Kidney (tissue), 22 donors: ENCODE measurements at regions of chr1 and their contacts with region 1.

Region 1: DNA sequence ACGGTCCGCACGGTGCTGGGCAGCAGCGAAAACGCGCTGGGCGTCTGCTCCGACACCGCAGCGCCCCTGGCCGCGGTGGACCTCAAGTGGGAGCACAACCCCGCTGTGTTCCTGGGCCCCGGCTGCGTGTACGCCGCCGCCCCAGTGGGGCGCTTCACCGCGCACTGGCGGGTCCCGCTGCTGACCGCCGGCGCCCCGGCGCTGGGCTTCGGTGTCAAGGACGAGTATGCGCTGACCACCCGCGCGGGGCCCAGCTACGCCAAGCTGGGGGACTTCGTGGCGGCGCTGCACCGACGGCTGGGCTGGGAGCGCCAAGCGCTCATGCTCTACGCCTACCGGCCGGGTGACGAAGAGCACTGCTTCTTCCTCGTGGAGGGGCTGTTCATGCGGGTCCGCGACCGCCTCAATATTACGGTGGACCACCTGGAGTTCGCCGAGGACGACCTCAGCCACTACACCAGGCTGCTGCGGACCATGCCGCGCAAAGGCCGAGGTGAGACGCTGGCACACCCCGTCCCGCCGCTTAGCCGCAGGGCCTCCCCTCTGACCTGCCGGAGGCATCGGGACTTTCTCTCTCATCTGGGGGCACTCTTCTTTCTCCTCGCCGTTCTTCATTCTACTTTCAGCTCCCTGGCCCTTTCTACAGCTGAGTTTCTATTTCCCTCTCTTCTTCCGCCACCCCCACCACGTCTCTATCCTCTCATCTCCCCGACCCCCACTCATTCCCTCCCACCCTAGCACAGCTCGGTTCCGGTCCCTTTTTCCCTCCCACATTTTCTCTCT is 1.0 kb downstream of the NPR1 start:
- DNase-seq: peak in 4 of 5 donors; percentile 54 to 79 (median 64)
- H3K4me3 ChIP-seq: peak overlapping the region; percentile 61 to 73 (median 64)
- H3K27ac ChIP-seq: peak overlapping the region; percentile 74 to 77
- H3K4me1 ChIP-seq: peaks cover 0 to 19% (median 6%) of the 10 kb centered on the region in 3 donors
- H3K27me3 ChIP-seq: no peaks in the 10 kb centered on the region
- CTCF ChIP-seq: no peak

Region 2: GRCh38 chr1:153763365-153764225 is 84.1 kb after region 1 on chr1:
- intact Hi-C with region 1: loop called (anchors 10 kb)
- DNase-seq: peak in 1 of 5 donors; percentile 50
- H3K4me3 ChIP-seq: no peak overlapping the region
- H3K27ac ChIP-seq: peak overlapping the region in 1 of 2 donors; percentile 55
- H3K4me1 ChIP-seq: peaks cover 0 to 12% (median 0%) of the 10 kb centered on the region in 3 donors
- H3K27me3 ChIP-seq: no peaks in the 10 kb centered on the region
- CTCF ChIP-seq: no peak